Activated CD8-positive, alpha-beta T cell treated with anti-CD3 and anti-CD28 coated beads, Interleukin-2, amount 10 ng/mL, durations not matched to agents 7 days and 5 days (primary cell): ENCODE measurements at regions of chr9 and their contacts with region 1.

Region 1: DNA sequence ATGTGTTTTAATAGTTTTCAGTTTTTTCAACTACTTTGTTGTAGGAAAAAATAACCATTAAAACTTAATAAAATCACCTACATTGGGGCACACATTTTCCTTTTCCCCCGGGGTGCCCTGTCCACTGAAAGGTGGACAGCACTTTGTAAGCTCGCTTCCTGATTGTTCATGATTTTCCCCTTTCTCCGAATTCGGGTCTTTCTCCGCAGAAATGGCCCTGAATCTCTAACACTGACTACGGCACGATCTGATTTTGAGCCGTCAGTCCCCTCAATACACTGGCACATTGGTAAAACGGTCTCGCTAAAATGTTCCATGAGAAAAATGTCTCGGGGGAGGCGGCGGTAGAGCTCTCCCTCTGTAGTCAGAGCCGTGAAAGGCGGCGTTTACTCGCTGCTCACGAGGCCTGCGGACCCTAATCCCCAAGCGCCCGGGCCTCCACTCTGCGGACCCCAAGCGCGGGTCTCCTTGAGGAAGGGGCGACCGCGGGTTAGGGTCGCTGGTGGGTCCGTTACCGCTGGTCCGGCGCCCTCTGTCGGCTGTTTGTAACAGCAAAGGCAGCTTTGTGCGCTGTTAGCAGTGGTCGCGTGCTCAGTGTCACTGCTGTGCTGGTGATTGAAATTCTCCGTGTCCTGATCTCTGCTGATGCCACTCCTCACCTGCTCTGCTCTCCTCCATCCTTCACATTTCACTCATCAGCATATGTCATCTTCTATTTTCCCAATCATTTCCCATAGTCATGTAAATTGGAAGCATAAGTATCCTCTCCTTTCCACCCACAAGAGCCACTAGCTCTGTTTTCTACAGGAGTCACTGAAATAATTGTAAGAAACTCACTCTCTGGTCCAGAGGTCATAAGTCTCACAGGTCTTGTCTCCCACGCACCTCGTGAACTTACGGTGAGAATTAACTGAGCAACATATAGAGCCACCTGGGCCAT is 10.8 kb upstream of the IFNA2 start:
- DNase-seq: peak; percentile 70
- ATAC-seq: peak; percentile 86
- H3K4me3 Mint-ChIP-seq: peak overlapping the region; percentile 48
- H3K27ac Mint-ChIP-seq: no peak overlapping the region
- H3K4me1 Mint-ChIP-seq: peaks cover 5% of the 10 kb centered on the region
- H3K27me3 Mint-ChIP-seq: peaks cover 53% of the 10 kb centered on the region

Region 2: GRCh38 chr9:20921362-20921761 is 474.7 kb before region 1 on chr9:
- CTCF ChIA-PET with region 1: no interaction called
- POLR2A ChIA-PET with region 1: no interaction called
- DNase-seq: no peak
- ATAC-seq: no peak
- H3K4me3 Mint-ChIP-seq: no peak overlapping the region
- H3K27ac Mint-ChIP-seq: no peak overlapping the region
- H3K4me1 Mint-ChIP-seq: peaks cover 13% of the 10 kb centered on the region
- H3K27me3 Mint-ChIP-seq: no peaks in the 10 kb centered on the region

Region 3: DNA sequence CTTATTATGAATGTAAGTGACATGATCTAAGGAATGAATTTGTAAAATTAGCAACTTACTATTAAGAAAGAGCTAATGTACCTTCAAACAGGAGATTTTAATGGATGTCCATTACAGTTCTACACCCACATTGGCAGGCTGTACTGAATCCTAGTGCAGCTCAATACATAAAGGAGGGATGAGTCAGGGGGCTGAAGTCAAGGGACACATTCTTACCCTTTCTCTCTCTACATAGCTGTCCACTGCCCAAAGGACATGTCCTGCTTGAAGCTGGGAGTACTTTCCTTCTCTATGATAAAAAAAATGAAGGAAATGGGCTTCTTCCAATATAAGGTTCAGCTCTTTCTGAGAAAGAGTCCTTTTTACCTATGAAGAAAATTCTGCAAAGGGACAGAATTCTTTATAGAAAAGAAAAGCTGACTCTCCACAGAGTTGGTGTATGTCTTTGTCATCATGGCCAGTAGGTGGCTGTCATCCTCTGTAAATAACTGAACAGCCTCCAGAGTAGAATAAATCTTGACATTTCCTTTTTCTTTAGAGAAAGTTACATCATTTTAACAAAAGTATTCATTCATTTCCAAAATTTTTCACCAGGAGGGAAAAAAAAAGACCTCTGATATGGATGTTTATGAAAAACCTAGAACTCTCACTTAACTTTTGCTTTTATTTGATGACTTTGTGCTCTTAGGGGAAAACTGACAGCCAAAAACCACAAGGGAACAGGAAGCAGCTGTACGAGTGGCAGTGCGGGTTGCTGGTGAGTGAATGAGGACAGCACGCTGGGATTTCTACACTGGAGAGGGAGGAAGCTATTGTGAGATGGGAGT is 143.1 kb before region 1 on chr9:
- CTCF ChIA-PET with region 1: interaction called, 24 read pairs
- POLR2A ChIA-PET with region 1: no interaction called
- DNase-seq: peak; percentile 35
- ATAC-seq: peak; percentile 84
- H3K4me3 Mint-ChIP-seq: no peak overlapping the region
- H3K27ac Mint-ChIP-seq: no peak overlapping the region
- H3K4me1 Mint-ChIP-seq: peaks cover 4% of the 10 kb centered on the region
- H3K27me3 Mint-ChIP-seq: peaks cover 43% of the 10 kb centered on the region

Region 4: DNA sequence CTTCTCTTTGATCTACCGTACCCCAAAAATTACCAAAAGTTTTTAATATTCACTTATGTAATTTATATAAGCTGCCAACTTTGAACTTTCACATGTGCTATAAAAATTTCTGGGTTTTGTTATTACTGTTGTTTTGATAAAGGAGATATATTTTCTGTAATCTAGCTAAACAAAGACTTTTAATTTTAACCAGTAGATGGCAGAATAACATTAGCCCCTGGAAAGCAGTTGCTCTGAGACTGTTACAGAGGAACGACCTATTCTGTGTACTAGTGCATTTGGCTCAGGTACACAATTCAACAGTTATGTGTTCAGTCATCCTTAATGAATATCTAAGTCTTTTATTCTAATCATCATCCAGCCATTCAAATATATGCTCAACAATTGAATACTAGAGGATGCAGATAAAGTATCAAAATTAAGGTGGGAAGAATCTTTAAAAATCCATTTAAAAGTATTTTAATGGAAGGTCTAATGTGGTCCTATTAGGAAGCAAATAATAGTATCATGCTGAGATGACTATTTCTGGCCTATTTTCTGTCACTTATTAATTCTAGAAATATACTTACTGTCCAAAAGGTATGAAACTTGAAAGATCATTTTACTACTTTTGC is 69.4 kb before region 1 on chr9:
- CTCF ChIA-PET with region 1: interaction called, 123 read pairs
- POLR2A ChIA-PET with region 1: no interaction called
- DNase-seq: no peak
- ATAC-seq: peak; percentile 80
- H3K4me3 Mint-ChIP-seq: no peak overlapping the region
- H3K27ac Mint-ChIP-seq: no peak overlapping the region
- H3K4me1 Mint-ChIP-seq: peaks cover 37% of the 10 kb centered on the region
- H3K27me3 Mint-ChIP-seq: no peaks in the 10 kb centered on the region

Region 5: DNA sequence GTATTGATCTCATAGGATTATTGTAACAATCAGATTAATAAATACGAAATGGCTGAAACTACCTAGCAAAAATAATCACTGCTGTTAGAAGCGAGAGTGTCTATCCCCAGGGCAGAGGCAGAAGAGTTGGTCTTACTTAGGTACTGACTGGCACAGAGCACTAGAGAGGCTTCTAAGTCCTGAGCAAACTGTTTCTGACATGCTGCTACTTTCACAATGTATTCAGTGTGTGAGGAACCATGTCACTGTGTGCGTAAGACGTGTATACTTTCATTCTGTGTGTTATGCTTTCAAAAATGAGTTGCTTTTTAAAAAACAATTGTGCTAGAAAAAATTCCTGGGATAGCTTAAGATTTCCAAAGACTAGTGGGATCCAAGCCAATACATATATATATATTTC is 55.3 kb before region 1 on chr9:
- CTCF ChIA-PET with region 1: interaction called, 123 read pairs
- POLR2A ChIA-PET with region 1: no interaction called
- DNase-seq: no peak
- ATAC-seq: no peak
- H3K4me3 Mint-ChIP-seq: no peak overlapping the region
- H3K27ac Mint-ChIP-seq: no peak overlapping the region
- H3K4me1 Mint-ChIP-seq: peaks cover 6% of the 10 kb centered on the region
- H3K27me3 Mint-ChIP-seq: peaks cover 18% of the 10 kb centered on the region

Region 6: GRCh38 chr9:21381448-21382339 is 14.4 kb before region 1 on chr9:
- CTCF ChIA-PET with region 1: interaction called, 25 read pairs
- POLR2A ChIA-PET with region 1: no interaction called
- DNase-seq: peak; percentile 45
- ATAC-seq: peak; percentile 90
- H3K4me3 Mint-ChIP-seq: peak overlapping the region; percentile 40
- H3K27ac Mint-ChIP-seq: no peak overlapping the region
- H3K4me1 Mint-ChIP-seq: peaks cover 22% of the 10 kb centered on the region
- H3K27me3 Mint-ChIP-seq: peaks cover 35% of the 10 kb centered on the region

Region 7: GRCh38 chr9:21428235-21428634 is 32.2 kb after region 1 on chr9:
- CTCF ChIA-PET with region 1: interaction called, 18 read pairs
- POLR2A ChIA-PET with region 1: no interaction called
- DNase-seq: no peak
- ATAC-seq: no peak
- H3K4me3 Mint-ChIP-seq: no peak overlapping the region
- H3K27ac Mint-ChIP-seq: no peak overlapping the region
- H3K4me1 Mint-ChIP-seq: no peaks in the 10 kb centered on the region
- H3K27me3 Mint-ChIP-seq: peaks cover 56% of the 10 kb centered on the region

Region 8: GRCh38 chr9:21465859-21466518 is 69.9 kb after region 1 on chr9:
- CTCF ChIA-PET with region 1: no interaction called
- POLR2A ChIA-PET with region 1: no interaction called
- DNase-seq: peak; percentile 43
- ATAC-seq: peak; percentile 65
- H3K4me3 Mint-ChIP-seq: no peak overlapping the region
- H3K27ac Mint-ChIP-seq: no peak overlapping the region
- H3K4me1 Mint-ChIP-seq: no peaks in the 10 kb centered on the region
- H3K27me3 Mint-ChIP-seq: peaks cover 15% of the 10 kb centered on the region